Prostate gland (tissue), 2 donors: ENCODE measurements at regions of chr12 and their contacts with region 1.

Region 1: DNA sequence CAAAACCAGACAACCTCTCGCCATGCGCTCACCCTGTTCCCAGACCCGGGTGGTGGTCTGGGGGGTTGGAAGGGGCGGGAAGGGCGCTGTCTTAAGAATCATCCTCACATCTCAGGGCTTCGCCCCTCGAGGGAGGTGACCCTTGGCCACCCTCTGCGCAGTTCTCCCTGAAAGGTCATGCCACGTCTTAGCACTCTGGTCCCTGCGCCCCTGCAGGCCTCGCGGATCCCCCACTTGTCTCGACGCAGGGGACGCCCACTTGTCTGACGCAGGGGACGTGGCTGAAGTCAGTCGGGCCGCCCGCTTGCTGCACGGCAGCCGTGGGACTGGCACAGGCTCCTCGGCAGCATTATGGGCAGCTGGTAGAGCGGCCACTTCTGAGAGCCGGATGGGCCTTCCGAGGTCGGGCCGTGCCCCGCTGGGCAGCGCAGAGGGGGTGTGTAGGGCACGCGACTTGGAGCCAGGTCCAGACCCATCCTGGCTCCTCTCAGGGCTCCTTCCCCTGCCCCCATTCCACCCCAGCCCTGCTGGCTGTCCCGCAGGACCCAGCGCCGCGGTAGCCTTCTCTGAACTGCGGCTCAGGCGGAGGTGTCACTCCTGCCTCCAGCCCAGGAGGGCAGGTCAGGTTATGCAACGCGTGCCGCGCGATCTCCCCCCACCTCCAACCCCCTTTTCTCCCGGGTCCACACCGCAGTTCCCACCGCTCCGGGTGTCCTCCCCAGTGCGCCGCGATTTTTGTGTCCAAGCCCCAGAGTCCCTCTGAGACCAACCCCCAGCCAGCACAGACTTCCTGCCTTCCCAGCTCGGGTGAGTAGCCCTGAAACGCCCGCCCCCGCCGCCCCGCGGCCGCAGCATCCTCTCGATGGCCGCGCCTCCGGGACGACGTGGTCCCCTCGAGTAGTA is 40.9 kb upstream of the CAPRIN2 start:
- DNase-seq: no peak
- H3K4me3 ChIP-seq: peak overlapping the region; percentile 33 to 34
- H3K27ac ChIP-seq: peak overlapping the region; percentile 22 to 34
- H3K4me1 ChIP-seq: no peaks in the 10 kb centered on the region
- H3K27me3 ChIP-seq: no peaks in the 10 kb centered on the region
- CTCF ChIP-seq: no peak
- POLR2A ChIP-seq: no peak

Region 2: GRCh38 chr12:30679241-30679640 is 116.4 kb before region 1 on chr12:
- intact Hi-C with region 1: no loop called
- DNase-seq: no peak
- H3K4me3 ChIP-seq: no peak overlapping the region
- H3K27ac ChIP-seq: no peak overlapping the region
- H3K4me1 ChIP-seq: no peaks in the 10 kb centered on the region
- H3K27me3 ChIP-seq: no peaks in the 10 kb centered on the region
- CTCF ChIP-seq: no peak
- POLR2A ChIP-seq: no peak

Region 3: GRCh38 chr12:30754709-30755394 is 40.8 kb before region 1 on chr12 and contains the start of gene CAPRIN2:
- intact Hi-C with region 1: loop called (anchors 5 kb)
- DNase-seq: peak; percentile 94
- H3K4me3 ChIP-seq: peak within 1 kb of the TSS; percentile 76 to 93
- H3K27ac ChIP-seq: peak within 1 kb of the TSS; percentile 86
- H3K4me1 ChIP-seq: peaks cover 5% of the 10 kb centered on the region
- H3K27me3 ChIP-seq: no peaks in the 10 kb centered on the region
- CTCF ChIP-seq: peak; percentile 45 to 68 (median 53)
- POLR2A ChIP-seq: peak; percentile 74
- total RNA-seq, gene CAPRIN2: 20.4 to 40.0 TPM

Region 4: DNA sequence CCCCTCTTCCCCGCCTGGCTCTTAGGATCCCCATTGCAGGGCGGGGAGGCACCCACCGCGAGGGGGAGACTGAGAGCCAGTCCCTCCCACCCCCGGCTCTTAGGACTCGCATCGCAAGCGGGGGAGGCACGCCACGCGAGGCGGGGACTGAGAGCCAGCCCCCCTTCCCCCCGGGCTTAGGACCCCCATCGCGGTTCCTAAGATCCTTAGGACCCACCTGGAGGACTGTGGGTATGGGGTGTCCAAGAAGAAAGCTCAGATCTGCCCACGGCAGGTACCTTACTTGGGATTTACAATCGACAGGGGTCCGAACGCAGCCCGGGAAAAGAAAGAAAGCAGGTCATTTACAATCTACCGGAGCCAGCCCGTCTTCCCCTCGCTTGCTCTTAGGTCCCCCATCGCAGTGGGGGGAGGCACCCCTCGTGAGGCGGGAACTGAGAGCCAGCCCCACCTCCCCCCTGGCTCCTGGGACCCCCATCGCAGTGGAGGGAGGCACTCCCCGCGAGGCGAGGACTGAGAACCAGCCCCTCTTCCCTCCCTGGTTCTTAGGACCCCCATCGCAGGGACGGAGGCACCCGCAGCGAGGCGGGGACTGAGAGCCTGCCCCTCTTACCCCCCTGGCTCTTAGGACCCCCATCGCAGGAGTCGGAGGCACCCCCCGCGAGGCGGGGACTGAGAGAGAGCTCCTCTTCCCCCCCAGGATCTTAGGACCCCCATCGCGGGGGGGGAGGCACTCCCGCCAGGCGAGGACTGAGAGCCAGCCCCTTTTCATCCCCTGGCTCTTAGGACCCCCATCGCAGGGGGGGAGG is 321.7 kb after region 1 on chr12:
- intact Hi-C with region 1: no loop called
- DNase-seq: peak; percentile 40
- H3K4me3 ChIP-seq: peak overlapping the region; percentile 19 to 31
- H3K27ac ChIP-seq: no peak overlapping the region
- H3K4me1 ChIP-seq: no peaks in the 10 kb centered on the region
- H3K27me3 ChIP-seq: no peaks in the 10 kb centered on the region
- CTCF ChIP-seq: peak; percentile 30 to 57 (median 45)
- POLR2A ChIP-seq: no peak